ENCODE measurements at regions of chr1 and their contacts with region 1.

Region 1: GRCh38 chr1:10152709-10153284 is 57.6 kb upstream of the KIF1B start:
- DNase-seq: peak; percentile 70
- ATAC-seq: peak; percentile 42
- H3K4me3 Mint-ChIP-seq: no peak overlapping the region
- H3K27ac Mint-ChIP-seq: no peak overlapping the region
- H3K4me1 Mint-ChIP-seq: no peaks in the 10 kb centered on the region
- H3K27me3 Mint-ChIP-seq: no peaks in the 10 kb centered on the region

Region 2: DNA sequence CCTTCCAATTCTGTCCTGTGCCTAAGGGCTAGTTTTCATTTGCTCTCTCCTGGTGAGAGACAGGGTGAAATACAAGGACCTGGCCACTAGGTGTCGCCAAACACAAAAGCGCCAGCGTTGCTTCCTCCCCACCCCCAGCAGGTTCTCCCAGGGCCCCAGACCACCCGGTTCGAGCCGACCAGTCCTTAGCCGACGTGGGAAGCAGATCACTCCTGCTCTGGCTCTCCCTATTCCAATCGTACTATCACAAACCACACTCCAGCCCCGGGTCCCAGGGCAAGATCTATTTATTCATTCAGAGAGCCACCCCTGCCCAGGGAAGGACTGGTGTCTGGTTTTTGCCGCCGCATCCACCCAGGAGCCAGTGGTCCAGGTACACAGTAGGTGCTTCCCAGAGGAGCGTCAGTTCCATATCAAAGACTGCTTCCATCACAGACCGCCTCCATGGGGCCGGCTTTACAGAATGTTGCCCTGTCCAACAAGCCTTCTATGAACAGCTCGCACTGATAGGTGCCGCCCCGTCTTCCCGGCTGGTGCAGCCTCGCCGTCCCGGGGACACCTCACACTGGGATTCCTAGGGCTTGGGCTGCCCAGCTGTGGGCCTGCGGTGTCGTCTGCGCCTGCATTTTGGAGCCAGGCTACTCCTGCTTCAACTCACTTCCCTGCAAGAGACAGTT is 277.7 kb before region 1 on chr1:
- CTCF ChIA-PET with region 1: interaction called, 3 read pairs
- POLR2A ChIA-PET with region 1: no interaction called
- intact Hi-C with region 1: loop called in 1 of 2 experiments (anchors 1 kb)
- DNase-seq: peak; percentile 86
- ATAC-seq: peak; percentile 96
- H3K4me3 Mint-ChIP-seq: no peak overlapping the region
- H3K27ac Mint-ChIP-seq: no peak overlapping the region
- H3K4me1 Mint-ChIP-seq: peaks cover 3% of the 10 kb centered on the region
- H3K27me3 Mint-ChIP-seq: no peaks in the 10 kb centered on the region

Region 3: DNA sequence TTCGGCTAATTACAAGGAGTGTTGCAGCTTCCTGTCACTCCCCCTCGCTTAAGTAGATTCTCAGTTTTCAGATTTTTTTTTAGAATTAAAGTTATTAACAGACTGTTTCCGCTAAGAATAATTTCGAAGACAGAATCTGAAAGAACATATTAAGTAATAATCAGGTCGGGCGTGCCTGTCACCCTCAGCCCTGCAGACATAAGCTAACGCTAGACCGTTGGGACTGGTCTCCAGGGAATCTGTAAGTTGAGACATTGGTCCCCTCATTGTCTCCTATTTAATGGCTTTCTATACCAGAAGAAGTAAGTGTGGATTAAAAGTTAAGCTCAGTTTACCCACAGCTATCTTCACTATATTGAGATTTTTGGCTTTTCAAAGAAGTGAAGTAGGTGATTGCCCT is 195.1 kb before region 1 on chr1:
- CTCF ChIA-PET with region 1: no interaction called
- POLR2A ChIA-PET with region 1: no interaction called
- intact Hi-C with region 1: loop called in 1 of 2 experiments (anchors 10 kb)
- DNase-seq: no peak
- ATAC-seq: no peak
- H3K4me3 Mint-ChIP-seq: no peak overlapping the region
- H3K27ac Mint-ChIP-seq: no peak overlapping the region
- H3K4me1 Mint-ChIP-seq: no peaks in the 10 kb centered on the region
- H3K27me3 Mint-ChIP-seq: no peaks in the 10 kb centered on the region

Region 4: DNA sequence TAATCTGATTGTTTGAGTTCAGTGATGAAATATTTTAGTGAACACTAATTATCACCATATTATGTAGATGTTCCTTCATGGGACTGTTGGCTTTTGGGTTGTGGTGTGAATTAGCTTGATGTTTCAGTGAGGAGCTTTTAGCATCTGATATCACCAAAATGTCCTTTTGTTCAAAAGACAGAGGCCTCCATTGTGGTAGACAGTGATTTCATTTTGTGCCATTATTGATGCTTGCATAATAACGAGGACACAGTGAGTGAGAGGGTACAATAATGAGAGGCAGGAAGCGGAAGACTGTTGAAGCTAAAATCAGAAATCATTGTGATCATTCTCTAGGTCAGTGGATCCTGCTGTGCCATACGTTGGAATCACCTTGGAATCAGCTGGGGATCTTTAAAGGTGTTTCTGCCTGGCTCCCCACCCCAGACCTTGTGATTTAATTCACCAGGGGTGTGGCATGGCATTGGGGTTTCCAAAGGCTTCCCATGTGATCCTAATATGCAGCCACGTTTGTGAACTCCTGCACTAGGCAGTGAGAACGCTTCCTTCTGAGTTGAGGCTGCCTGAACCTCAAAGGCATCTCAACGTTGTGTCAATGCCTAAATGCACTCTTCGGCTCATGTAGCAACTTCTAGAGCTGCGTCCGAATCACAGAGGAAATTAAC is 24.6 kb before region 1 on chr1:
- CTCF ChIA-PET with region 1: interaction called, 13 read pairs
- POLR2A ChIA-PET with region 1: no interaction called
- intact Hi-C with region 1: no loop called
- DNase-seq: no peak
- ATAC-seq: no peak
- H3K4me3 Mint-ChIP-seq: no peak overlapping the region
- H3K27ac Mint-ChIP-seq: no peak overlapping the region
- H3K4me1 Mint-ChIP-seq: no peaks in the 10 kb centered on the region
- H3K27me3 Mint-ChIP-seq: no peaks in the 10 kb centered on the region

Measured in activated CD4-positive, alpha-beta T cell treated with anti-CD3 and anti-CD28 coated beads for 36 hours (primary cell).